ENCODE measurements at regions of chr4 and their contacts with region 1.

Region 1: GRCh38 chr4:35649778-35650177 is 594.5 kb downstream of the ARAP2 start:
- DNase-seq: no peak
- H3K4me3 ChIP-seq: no peak overlapping the region
- H3K27ac ChIP-seq: no peak overlapping the region
- H3K4me1 ChIP-seq: no peaks in the 10 kb centered on the region
- H3K27me3 ChIP-seq: no peaks in the 10 kb centered on the region
- CTCF ChIP-seq: no peak
- EP300 ChIP-seq: no peak
- POLR2A ChIP-seq: no peak

Region 2: GRCh38 chr4:35525192-35525978 is 124.4 kb before region 1 on chr4:
- intact Hi-C with region 1: no loop called
- DNase-seq: no peak
- H3K4me3 ChIP-seq: no peak overlapping the region
- H3K27ac ChIP-seq: no peak overlapping the region
- H3K4me1 ChIP-seq: no peaks in the 10 kb centered on the region
- H3K27me3 ChIP-seq: no peaks in the 10 kb centered on the region
- CTCF ChIP-seq: no peak
- EP300 ChIP-seq: no peak
- POLR2A ChIP-seq: no peak

Region 3: DNA sequence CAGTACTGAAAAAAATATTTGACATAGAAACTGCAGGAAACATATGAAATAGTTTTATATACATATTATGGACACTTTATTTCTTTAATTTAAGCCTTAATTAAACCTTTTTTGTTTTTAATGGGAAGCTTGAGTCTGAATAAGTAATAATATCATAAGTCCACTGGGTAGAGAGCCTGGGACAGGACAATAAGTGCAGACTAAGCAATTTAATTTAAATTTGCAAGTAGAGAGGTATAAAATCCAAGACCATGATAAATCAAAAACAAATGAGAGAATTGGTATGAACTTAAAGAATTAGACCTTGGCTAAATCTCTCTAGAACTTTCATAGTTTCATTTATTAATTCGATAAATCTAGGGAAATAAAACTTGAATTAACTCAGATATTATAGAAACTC is 23.4 kb after region 1 on chr4:
- intact Hi-C with region 1: no loop called
- DNase-seq: no peak
- H3K4me3 ChIP-seq: no peak overlapping the region
- H3K27ac ChIP-seq: no peak overlapping the region
- H3K4me1 ChIP-seq: no peaks in the 10 kb centered on the region
- H3K27me3 ChIP-seq: no peaks in the 10 kb centered on the region
- CTCF ChIP-seq: no peak
- EP300 ChIP-seq: no peak
- POLR2A ChIP-seq: no peak

Region 4: GRCh38 chr4:35710343-35710742 is 60.6 kb after region 1 on chr4:
- intact Hi-C with region 1: loop called in 1 of 4 experiments (anchors 2 kb)
- DNase-seq: no peak
- H3K4me3 ChIP-seq: no peak overlapping the region
- H3K27ac ChIP-seq: no peak overlapping the region
- H3K4me1 ChIP-seq: no peaks in the 10 kb centered on the region
- H3K27me3 ChIP-seq: no peaks in the 10 kb centered on the region
- CTCF ChIP-seq: no peak
- EP300 ChIP-seq: no peak
- POLR2A ChIP-seq: no peak

Region 5: DNA sequence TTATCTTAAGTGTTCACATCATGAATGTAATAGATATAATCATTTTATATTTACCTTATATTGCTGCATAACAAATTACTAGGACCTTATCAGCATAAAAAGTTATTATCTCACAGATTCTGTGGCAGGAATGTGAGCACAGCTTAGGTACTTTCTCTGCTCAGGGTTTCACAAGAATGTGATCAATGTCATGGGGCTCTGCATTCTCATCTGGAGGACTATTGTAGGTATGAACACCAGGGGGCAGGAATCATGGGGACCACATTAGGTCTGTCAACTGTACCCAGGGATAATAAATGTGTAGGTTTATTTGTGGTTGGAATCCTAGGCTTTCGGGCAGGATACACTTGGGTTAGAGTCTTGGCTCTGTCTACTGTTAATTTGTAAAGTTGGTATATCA is 75.4 kb after region 1 on chr4:
- intact Hi-C with region 1: no loop called
- DNase-seq: no peak
- H3K4me3 ChIP-seq: no peak overlapping the region
- H3K27ac ChIP-seq: no peak overlapping the region
- H3K4me1 ChIP-seq: no peaks in the 10 kb centered on the region
- H3K27me3 ChIP-seq: no peaks in the 10 kb centered on the region
- CTCF ChIP-seq: no peak
- EP300 ChIP-seq: no peak
- POLR2A ChIP-seq: no peak

Measured in ovary (tissue), 10 donors.